ENCODE measurements at regions of chr21 and their contacts with region 1.

Region 1: GRCh38 chr21:44914176-44914874 is 6.4 kb downstream of the ITGB2 start:
- DNase-seq: no peak
- ATAC-seq: no peak
- H3K4me3 ChIP-seq: peak overlapping the region in 1 of 2 experiments; percentile 47; a peak in 2 of 4 replicates
- H3K27ac ChIP-seq: peak overlapping the region; percentile 78
- H3K4me1 ChIP-seq: peaks cover 39% of the 10 kb centered on the region
- H3K27me3 ChIP-seq: no peaks in the 10 kb centered on the region
- CTCF ChIP-seq: no peak

Region 2: DNA sequence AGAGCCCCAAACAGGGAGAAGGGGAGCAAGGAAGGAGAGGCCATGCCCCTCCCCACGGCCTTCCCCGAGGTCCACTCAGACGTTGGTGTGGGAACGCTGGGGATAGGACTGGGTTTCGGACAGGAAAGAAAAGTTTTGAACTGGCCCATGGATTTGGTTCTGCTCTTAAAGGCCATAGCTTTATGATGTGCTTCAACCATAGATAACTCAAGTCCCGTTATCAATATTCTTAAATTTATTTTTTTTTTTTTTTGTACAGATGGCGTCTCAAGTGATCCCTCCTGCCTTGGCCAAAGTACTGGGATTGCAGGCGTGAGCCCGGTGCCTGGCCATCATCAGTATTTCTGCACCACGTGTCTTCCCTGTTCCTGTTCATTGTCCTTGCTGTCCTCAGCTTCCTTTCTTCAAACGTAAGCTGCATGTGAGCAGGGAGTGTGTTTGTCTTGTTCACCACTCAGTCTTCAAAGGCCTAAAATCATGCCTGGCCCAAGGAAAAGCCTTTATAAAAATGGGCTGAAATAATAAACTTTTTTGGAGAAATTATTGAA is 373.5 kb before region 1 on chr21:
- CTCF ChIA-PET with region 1: interaction called, 11 read pairs
- POLR2A ChIA-PET with region 1: no interaction called
- in situ Hi-C with region 1: no loop called
- intact Hi-C with region 1: no loop called
- DNase-seq: no peak
- ATAC-seq: no peak
- H3K4me3 ChIP-seq: no peak overlapping the region
- H3K27ac ChIP-seq: no peak overlapping the region
- H3K4me1 ChIP-seq: no peaks in the 10 kb centered on the region
- H3K27me3 ChIP-seq: no peaks in the 10 kb centered on the region
- CTCF ChIP-seq: no peak